ENCODE measurements at regions of chr12 and their contacts with region 1.

Region 1: GRCh38 chr12:1744932-1745331 is 54.1 kb downstream of the ADIPOR2 start:
- DNase-seq: no peak
- ATAC-seq: no peak
- H3K4me3 ChIP-seq: no peak overlapping the region
- H3K27ac ChIP-seq: no peak overlapping the region
- H3K4me1 ChIP-seq: peaks cover 4% of the 10 kb centered on the region; the same call in 1 of the 2 replicates
- H3K27me3 ChIP-seq: no peaks in the 10 kb centered on the region
- CTCF ChIP-seq: no peak
- EP300 ChIP-seq: no peak
- POLR2A ChIP-seq: no peak
- RAD21 ChIP-seq: no peak

Region 2: DNA sequence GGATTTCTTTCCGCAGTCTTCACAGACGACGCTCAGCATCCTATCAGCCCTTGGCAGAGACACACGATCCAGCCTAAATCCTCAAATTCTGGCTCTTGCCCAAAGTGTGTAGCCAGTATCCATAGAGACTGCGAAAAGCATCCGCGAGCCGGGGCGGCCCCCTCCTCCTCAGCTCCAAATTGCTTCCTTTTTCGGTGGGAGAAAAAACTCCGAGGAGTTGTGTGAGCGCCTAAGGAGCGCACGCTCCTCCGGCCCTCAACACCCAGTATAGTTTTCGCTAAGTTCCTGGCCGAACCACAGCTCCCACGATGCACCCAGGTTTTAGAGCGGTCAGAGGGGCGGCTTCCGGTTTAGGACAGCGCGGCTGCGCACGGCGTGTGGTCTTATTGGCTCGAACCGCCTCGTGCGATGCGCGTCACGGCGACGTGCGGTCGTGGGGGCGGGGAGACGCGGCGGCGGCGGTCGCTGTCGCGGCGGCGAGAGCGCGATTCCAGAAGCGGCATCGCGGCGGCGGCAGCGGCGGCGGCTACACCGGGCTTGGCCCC is 54.3 kb before region 1 on chr12 and contains the start of gene ADIPOR2:
- CTCF ChIA-PET with region 1: no interaction called
- POLR2A ChIA-PET with region 1: interaction called, 4 read pairs
- RAD21 ChIA-PET with region 1: no interaction called
- SMC1A ChIA-PET with region 1: interaction called, 4 read pairs
- in situ Hi-C with region 1: no loop called
- intact Hi-C with region 1: loop called (anchors 5 kb)
- DNase-seq: peak; percentile 90
- ATAC-seq: peak; percentile 98
- H3K4me3 ChIP-seq: peak within 1 kb of the TSS; percentile 93
- H3K27ac ChIP-seq: peak within 1 kb of the TSS; percentile 71
- H3K4me1 ChIP-seq: peaks cover 5% of the 10 kb centered on the region; the same call in 1 of the 2 replicates
- H3K27me3 ChIP-seq: no peaks in the 10 kb centered on the region
- CTCF ChIP-seq: no peak
- EP300 ChIP-seq: no peak
- POLR2A ChIP-seq: peak; percentile 85
- RAD21 ChIP-seq: no peak
- polyA plus RNA-seq, gene ADIPOR2: 15.4 to 18.2 TPM

Measured in GM12878 (cell line).